Colonic mucosa (tissue), 4 donors: ENCODE measurements at regions of chr7 and their contacts with region 1.

Region 1: DNA sequence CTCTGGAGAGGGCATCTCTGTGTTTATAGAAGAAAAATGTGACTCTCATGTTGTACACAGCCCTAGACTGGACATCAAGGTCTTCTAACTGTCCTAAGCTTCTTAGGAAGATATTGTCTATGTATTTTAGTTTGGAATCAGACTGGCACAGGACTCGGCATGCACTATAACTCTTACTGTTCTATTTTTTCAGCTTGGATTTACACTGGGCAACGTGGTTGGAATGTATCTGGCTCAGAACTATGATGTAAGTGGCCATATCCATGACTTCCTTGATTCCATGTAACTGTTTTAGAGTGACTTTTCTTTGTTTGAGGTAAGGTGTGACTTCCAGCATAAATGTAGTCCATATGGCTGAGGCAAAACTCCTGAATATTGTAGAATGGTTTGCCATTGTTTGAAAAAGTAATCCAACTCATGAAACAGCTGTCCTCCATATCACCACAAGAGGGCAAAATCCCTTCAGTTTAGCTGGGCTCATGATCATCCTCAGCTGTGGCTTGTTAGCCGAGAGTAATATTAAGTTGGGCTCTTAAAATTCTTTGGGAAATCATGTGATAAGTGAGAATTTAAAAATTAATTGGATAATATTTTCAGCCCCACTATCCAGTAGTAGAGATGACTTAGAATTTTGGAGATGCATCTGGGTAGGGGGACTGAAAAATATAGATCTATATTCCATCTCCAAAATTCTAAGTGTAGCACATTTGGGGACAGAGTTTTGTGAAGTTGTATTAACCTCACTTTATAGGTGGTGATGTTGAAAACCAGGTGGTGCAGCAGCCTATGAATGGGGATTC is 10.4 kb downstream of the STMP1 start:
- DNase-seq: peak; percentile 32
- H3K4me3 ChIP-seq: no peak overlapping the region
- H3K27ac ChIP-seq: no peak overlapping the region
- H3K4me1 ChIP-seq: no peaks in the 10 kb centered on the region
- H3K27me3 ChIP-seq: no peaks in the 10 kb centered on the region
- CTCF ChIP-seq: peak; percentile 68

Region 2: GRCh38 chr7:136016649-136017395 is 344.1 kb after region 1 on chr7:
- intact Hi-C with region 1: loop called (anchors 2 kb)
- DNase-seq: no peak
- H3K4me3 ChIP-seq: no peak overlapping the region
- H3K27ac ChIP-seq: no peak overlapping the region
- H3K4me1 ChIP-seq: no peaks in the 10 kb centered on the region
- H3K27me3 ChIP-seq: no peaks in the 10 kb centered on the region
- CTCF ChIP-seq: no peak